ENCODE measurements at regions of chr6 and their contacts with region 1.

Region 1: GRCh38 chr6:167826230-167826895 is 348 bp upstream of the AFDN start:
- DNase-seq: no peak
- ATAC-seq: peak; percentile 86
- H3K4me3 ChIP-seq: peak overlapping the region; percentile 79 to 100 (median 93)
- H3K27ac ChIP-seq: peak overlapping the region; percentile 63
- H3K4me1 ChIP-seq: peaks cover 36% of the 10 kb centered on the region
- H3K27me3 ChIP-seq: no peaks in the 10 kb centered on the region; a peak in 1 of 5 replicates
- CTCF ChIP-seq: peak; percentile 66
- EP300 ChIP-seq: 0 out of 4 replicates have a peak, but pooled peaks of 1 of the 2 experiments have one; percentile 7
- POLR2A ChIP-seq: peak in 1 of 2 experiments; percentile 68; a peak in 2 of 4 replicates
- RAD21 ChIP-seq: peak; percentile 89

Region 2: DNA sequence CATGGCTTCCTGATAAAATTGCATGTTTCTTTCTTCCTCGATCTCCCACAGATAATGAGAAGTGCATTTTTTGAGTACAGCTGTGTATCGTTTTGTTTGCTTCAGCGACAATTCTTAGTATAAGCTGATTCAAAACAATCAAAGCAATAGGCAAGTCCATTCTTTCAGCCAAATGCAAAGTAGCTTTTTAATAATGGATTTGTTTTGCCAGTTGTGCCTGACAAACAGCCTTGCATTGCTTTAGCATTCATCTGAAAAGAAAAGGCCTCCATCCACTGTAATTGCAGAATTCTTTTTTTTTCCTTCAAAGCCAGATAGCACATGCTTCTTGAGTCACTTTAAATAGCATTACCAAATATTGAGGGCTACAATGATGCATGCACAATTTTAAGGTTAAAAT is 469.5 kb before region 1 on chr6:
- CTCF ChIA-PET with region 1: no interaction called
- POLR2A ChIA-PET with region 1: no interaction called
- in situ Hi-C with region 1: no loop called
- intact Hi-C with region 1: no loop called
- DNase-seq: no peak
- ATAC-seq: no peak
- H3K4me3 ChIP-seq: no peak overlapping the region
- H3K27ac ChIP-seq: no peak overlapping the region
- H3K4me1 ChIP-seq: no peaks in the 10 kb centered on the region
- H3K27me3 ChIP-seq: no peaks in the 10 kb centered on the region
- CTCF ChIP-seq: no peak
- EP300 ChIP-seq: no peak
- POLR2A ChIP-seq: no peak
- RAD21 ChIP-seq: no peak

Region 3: GRCh38 chr6:167455371-167455770 is 371.0 kb before region 1 on chr6:
- CTCF ChIA-PET with region 1: no interaction called
- POLR2A ChIA-PET with region 1: no interaction called
- in situ Hi-C with region 1: no loop called
- intact Hi-C with region 1: no loop called
- DNase-seq: no peak
- ATAC-seq: no peak
- H3K4me3 ChIP-seq: no peak overlapping the region
- H3K27ac ChIP-seq: no peak overlapping the region
- H3K4me1 ChIP-seq: no peaks in the 10 kb centered on the region
- H3K27me3 ChIP-seq: peaks cover 0 to 12% of the 10 kb centered on the region in 2 experiments; a peak in 2 of 5 replicates
- CTCF ChIP-seq: no peak
- EP300 ChIP-seq: no peak
- POLR2A ChIP-seq: no peak
- RAD21 ChIP-seq: no peak

Region 4: GRCh38 chr6:167501781-167502385 is 324.5 kb before region 1 on chr6:
- CTCF ChIA-PET with region 1: no interaction called
- POLR2A ChIA-PET with region 1: no interaction called
- in situ Hi-C with region 1: no loop called
- intact Hi-C with region 1: loop called (anchors 5 kb)
- DNase-seq: peak; percentile 77
- ATAC-seq: peak; percentile 74
- H3K4me3 ChIP-seq: no peak overlapping the region
- H3K27ac ChIP-seq: no peak overlapping the region
- H3K4me1 ChIP-seq: peaks cover 89% of the 10 kb centered on the region
- H3K27me3 ChIP-seq: no peaks in the 10 kb centered on the region
- CTCF ChIP-seq: peak; percentile 93
- EP300 ChIP-seq: no peak
- POLR2A ChIP-seq: no peak
- RAD21 ChIP-seq: peak; percentile 98

Region 5: GRCh38 chr6:167668019-167668753 is 158.2 kb before region 1 on chr6:
- CTCF ChIA-PET with region 1: no interaction called
- POLR2A ChIA-PET with region 1: no interaction called
- in situ Hi-C with region 1: no loop called
- intact Hi-C with region 1: loop called (anchors 1 kb)
- DNase-seq: peak; percentile 96
- ATAC-seq: peak; percentile 84
- H3K4me3 ChIP-seq: peak overlapping the region; percentile 1 to 54 (median 6); a peak in 3 of 6 replicates
- H3K27ac ChIP-seq: peak overlapping the region; percentile 85
- H3K4me1 ChIP-seq: peaks cover 100% of the 10 kb centered on the region
- H3K27me3 ChIP-seq: no peaks in the 10 kb centered on the region
- CTCF ChIP-seq: peak; percentile 57
- EP300 ChIP-seq: peak in 1 of 2 experiments; percentile 90; a peak in 2 of 4 replicates
- POLR2A ChIP-seq: no peak
- RAD21 ChIP-seq: peak; percentile 41

Region 6: DNA sequence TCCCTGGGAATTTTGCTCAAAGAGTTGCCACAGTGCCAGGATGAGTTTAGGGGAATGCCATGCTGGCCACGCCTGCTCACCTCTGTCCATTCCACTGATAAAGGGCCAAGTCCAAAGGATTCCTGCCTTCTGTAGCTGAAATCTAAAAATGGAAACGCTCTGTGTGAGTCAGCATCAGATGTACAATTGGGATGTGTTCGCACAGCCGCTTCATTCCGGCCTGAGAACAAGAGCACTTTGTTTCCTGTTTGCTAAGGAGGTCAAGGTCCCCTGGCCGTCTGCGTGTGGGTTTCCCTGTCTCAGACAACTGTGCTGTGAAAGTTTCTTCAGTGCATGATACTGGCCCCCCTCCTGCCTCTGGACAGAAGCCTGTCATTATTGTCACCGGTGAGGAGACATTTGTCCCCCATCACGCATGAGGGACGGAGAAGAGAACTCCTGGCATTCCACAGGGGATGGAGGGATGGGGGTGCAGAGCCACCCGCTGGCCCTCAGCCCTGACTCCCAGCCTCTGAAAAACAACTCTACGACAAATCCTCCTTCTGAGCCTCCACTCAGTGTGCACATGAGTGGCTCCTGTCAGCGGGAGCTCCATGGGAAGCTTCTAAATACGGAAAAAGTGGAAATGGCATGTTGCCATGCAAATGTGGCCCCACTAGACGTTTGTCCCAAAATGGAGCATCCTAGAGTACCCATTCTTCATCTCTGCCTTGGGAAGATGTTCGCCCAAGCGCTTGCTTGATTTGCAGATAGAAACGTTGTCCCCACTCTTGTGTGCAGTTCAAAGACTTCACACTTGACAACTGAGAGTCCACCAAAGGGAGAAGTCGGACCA is 143.1 kb before region 1 on chr6:
- CTCF ChIA-PET with region 1: no interaction called
- POLR2A ChIA-PET with region 1: interaction called, 5 read pairs
- in situ Hi-C with region 1: no loop called
- intact Hi-C with region 1: loop called (anchors 5 kb)
- DNase-seq: peak; percentile 100
- ATAC-seq: peak; percentile 93
- H3K4me3 ChIP-seq: peak overlapping the region in 1 of 3 experiments; percentile 35; a peak in 2 of 6 replicates
- H3K27ac ChIP-seq: peak overlapping the region; percentile 96
- H3K4me1 ChIP-seq: peaks cover 77% of the 10 kb centered on the region
- H3K27me3 ChIP-seq: no peaks in the 10 kb centered on the region
- CTCF ChIP-seq: peak; percentile 33
- EP300 ChIP-seq: peak; percentile 99
- POLR2A ChIP-seq: peak in 1 of 2 experiments; percentile 42; a peak in 2 of 4 replicates
- RAD21 ChIP-seq: peak; percentile 70; the same call in 1 of the 2 replicates

Region 7: GRCh38 chr6:167733740-167734661 is 92.4 kb before region 1 on chr6:
- CTCF ChIA-PET with region 1: no interaction called
- POLR2A ChIA-PET with region 1: no interaction called
- in situ Hi-C with region 1: no loop called
- intact Hi-C with region 1: loop called (anchors 2 kb)
- DNase-seq: peak; percentile 99
- ATAC-seq: peak; percentile 85
- H3K4me3 ChIP-seq: peak overlapping the region in 1 of 3 experiments; percentile 47; a peak in 2 of 6 replicates
- H3K27ac ChIP-seq: peak overlapping the region; percentile 74
- H3K4me1 ChIP-seq: peaks cover 53% of the 10 kb centered on the region
- H3K27me3 ChIP-seq: no peaks in the 10 kb centered on the region
- CTCF ChIP-seq: peak; percentile 20; the same call in 1 of the 2 replicates
- EP300 ChIP-seq: peak; percentile 97 to 99
- POLR2A ChIP-seq: peak; percentile 34 to 82; a peak in 3 of 4 replicates
- RAD21 ChIP-seq: peak; percentile 55

Region 8: DNA sequence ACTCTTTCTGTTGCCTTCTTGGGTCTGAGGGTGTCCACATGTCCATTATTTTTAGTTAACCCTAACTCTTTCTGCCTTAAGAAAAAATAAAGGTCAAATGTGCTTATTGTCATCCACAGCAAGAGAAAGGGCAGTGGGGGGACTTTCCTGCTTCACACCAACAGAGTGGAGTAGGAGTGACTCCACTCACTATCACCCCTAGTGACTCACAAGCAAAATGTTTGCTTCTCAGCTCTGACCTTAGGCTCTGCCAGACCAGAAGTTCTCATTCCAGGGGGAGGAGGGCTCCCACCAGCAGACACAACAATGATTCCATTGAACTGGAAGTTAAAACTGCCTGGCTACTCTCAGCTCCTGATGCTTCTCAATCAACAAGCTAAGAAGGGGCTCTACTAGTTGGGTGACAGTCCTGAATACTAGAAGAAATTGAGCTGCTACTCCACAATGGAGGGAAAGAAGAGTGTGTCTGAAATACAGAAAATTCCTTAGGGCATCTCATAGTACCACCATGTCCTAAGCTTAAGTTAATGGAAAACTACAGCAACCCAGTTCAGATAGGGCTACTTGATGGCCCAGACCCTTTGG is 83.6 kb before region 1 on chr6:
- CTCF ChIA-PET with region 1: no interaction called
- POLR2A ChIA-PET with region 1: no interaction called
- in situ Hi-C with region 1: no loop called
- intact Hi-C with region 1: loop called (anchors 2 kb)
- DNase-seq: peak; percentile 97
- ATAC-seq: peak; percentile 100
- H3K4me3 ChIP-seq: no peak overlapping the region
- H3K27ac ChIP-seq: peak overlapping the region; percentile 52
- H3K4me1 ChIP-seq: peaks cover 35% of the 10 kb centered on the region
- H3K27me3 ChIP-seq: no peaks in the 10 kb centered on the region
- CTCF ChIP-seq: peak; percentile 83
- EP300 ChIP-seq: peak in 1 of 2 experiments; percentile 74; a peak in 2 of 4 replicates
- POLR2A ChIP-seq: no peak
- RAD21 ChIP-seq: peak; percentile 80

Region 9: DNA sequence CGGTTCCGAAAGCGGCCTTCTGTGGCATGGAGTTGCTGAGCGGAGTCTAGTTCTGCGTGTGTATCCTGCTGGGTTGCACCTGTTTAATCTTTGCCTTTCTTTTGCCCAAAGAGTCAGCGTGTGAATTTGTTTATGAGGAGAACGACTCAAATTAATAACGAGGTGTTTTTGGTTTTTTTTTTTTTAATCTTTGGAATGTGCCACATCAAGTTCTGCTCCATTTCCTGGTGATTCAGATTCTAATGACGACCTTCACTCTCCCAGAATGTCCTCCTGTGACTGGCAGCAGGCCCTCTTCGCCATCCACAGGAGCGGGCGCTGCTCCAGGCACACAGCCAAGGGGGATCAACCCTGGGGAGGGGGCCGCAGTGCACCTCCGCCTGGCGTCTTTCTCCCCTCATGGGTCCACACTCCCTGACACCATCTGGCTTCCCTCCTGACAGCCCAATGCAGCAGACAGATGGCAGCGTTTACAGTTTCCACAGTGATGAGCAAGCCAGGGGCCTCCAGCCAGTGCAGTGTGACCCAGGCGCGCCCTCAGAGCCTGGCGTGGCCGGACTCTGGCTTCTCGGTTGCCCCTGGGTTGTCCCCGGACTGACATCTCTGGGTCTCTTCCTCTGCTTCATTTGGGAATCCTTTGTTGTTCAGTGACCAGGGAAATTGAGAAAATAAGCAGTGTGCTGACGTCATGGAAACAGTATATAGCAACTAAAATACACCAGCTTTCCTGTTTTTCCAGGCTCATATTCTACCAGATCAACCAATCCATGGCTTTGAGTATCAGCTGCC is 27.1 kb before region 1 on chr6:
- CTCF ChIA-PET with region 1: no interaction called
- POLR2A ChIA-PET with region 1: no interaction called
- in situ Hi-C with region 1: no loop called
- intact Hi-C with region 1: no loop called
- DNase-seq: no peak
- ATAC-seq: peak; percentile 69
- H3K4me3 ChIP-seq: no peak overlapping the region
- H3K27ac ChIP-seq: no peak overlapping the region
- H3K4me1 ChIP-seq: peaks cover 36% of the 10 kb centered on the region
- H3K27me3 ChIP-seq: peaks cover 0 to 2% of the 10 kb centered on the region in 2 experiments; a peak in 2 of 5 replicates
- CTCF ChIP-seq: peak; percentile 47
- EP300 ChIP-seq: no peak
- POLR2A ChIP-seq: no peak
- RAD21 ChIP-seq: no peak

Region 10: DNA sequence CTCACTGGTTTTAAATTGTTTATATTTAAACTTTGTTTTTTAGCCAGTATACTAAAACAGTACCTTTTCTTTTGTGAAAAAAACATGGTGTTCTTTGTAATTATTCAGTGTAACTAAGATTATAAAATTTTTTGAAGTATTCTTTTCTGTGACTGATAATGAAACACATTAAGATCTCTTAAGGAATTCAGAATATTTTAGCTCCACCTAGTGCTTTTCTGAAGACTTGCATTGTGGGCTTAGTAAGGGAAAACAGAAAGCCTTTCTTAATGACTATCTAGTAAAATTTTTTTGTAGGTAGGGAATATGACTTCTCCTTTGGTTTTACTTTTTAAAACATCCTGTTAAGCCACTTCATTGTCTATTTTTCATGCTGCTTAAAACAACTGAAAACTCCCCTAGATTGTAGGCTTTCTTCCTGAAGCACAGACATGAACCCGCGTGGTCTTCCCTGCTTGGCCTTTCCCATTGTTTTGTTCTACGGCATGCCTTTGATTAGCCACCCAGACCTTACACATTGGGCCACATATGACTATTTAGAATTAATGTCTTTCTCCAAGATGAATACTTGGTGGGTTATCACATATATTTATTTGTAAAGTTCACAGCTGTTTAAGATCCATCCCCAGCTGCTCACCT is 72.4 kb after region 1 on chr6:
- CTCF ChIA-PET with region 1: interaction called, 3 read pairs
- POLR2A ChIA-PET with region 1: no interaction called
- in situ Hi-C with region 1: no loop called
- intact Hi-C with region 1: loop called (anchors 5 kb)
- DNase-seq: peak; percentile 43
- ATAC-seq: no peak
- H3K4me3 ChIP-seq: no peak overlapping the region
- H3K27ac ChIP-seq: no peak overlapping the region
- H3K4me1 ChIP-seq: peaks cover 8% of the 10 kb centered on the region; the same call in 1 of the 2 replicates
- H3K27me3 ChIP-seq: no peaks in the 10 kb centered on the region
- CTCF ChIP-seq: peak; percentile 56
- EP300 ChIP-seq: no peak
- POLR2A ChIP-seq: no peak
- RAD21 ChIP-seq: peak; percentile 80

Region 11: GRCh38 chr6:168035098-168035660 is 208.8 kb after region 1 on chr6:
- CTCF ChIA-PET with region 1: no interaction called
- POLR2A ChIA-PET with region 1: no interaction called
- in situ Hi-C with region 1: no loop called
- intact Hi-C with region 1: no loop called
- DNase-seq: no peak
- ATAC-seq: peak; percentile 39
- H3K4me3 ChIP-seq: peak overlapping the region in 1 of 3 experiments; percentile 44; a peak in 1 of 6 replicates
- H3K27ac ChIP-seq: no peak overlapping the region
- H3K4me1 ChIP-seq: peaks cover 24% of the 10 kb centered on the region
- H3K27me3 ChIP-seq: peaks cover 4 to 53% of the 10 kb centered on the region in 2 experiments; a peak in 4 of 5 replicates
- CTCF ChIP-seq: no peak
- EP300 ChIP-seq: no peak
- POLR2A ChIP-seq: no peak
- RAD21 ChIP-seq: no peak